ENCODE measurements at regions of chr6 and their contacts with region 1.

Region 1: GRCh38 chr6:31197559-31198305 is 27.2 kb upstream of the POU5F1 start:
- DNase-seq: peak; percentile 92 to 94
- H3K4me3 ChIP-seq: peak overlapping the region; percentile 50 to 76 (median 67)
- H3K27ac ChIP-seq: peak overlapping the region; percentile 97
- H3K4me1 ChIP-seq: peaks cover 0 to 2% of the 10 kb centered on the region in 2 donors
- H3K27me3 ChIP-seq: no peaks in the 10 kb centered on the region
- CTCF ChIP-seq: peak in 1 of 3 donors; percentile 7
- POLR2A ChIP-seq: peak; percentile 86

Region 2: GRCh38 chr6:31366693-31367470 is 169.2 kb after region 1 on chr6:
- intact Hi-C with region 1: loop called (anchors 10 kb)
- DNase-seq: peak; percentile 89
- H3K4me3 ChIP-seq: peak overlapping the region; percentile 11 to 62 (median 45)
- H3K27ac ChIP-seq: peak overlapping the region in 1 of 2 donors; percentile 64
- H3K4me1 ChIP-seq: no peaks in the 10 kb centered on the region
- H3K27me3 ChIP-seq: no peaks in the 10 kb centered on the region
- CTCF ChIP-seq: peak; percentile 93 to 98 (median 98)
- POLR2A ChIP-seq: no peak